ENCODE measurements at regions of chr14 and their contacts with region 1.

Region 1: GRCh38 chr14:54169254-54169924 is 212.8 kb upstream of the BMP4 start:
- DNase-seq: peak; percentile 100
- ATAC-seq: peak; percentile 85
- H3K4me3 ChIP-seq: peak overlapping the region; percentile 8; the same call in 1 of the 2 replicates
- H3K27ac ChIP-seq: peak overlapping the region; percentile 86
- H3K4me1 ChIP-seq: peaks cover 76% of the 10 kb centered on the region
- H3K27me3 ChIP-seq: no peaks in the 10 kb centered on the region
- CTCF ChIP-seq: peak; percentile 31; the same call in 1 of the 2 replicates

Region 2: GRCh38 chr14:53788566-53788965 is 380.8 kb before region 1 on chr14:
- CTCF ChIA-PET with region 1: interaction called, 10 read pairs
- POLR2A ChIA-PET with region 1: no interaction called
- intact Hi-C with region 1: no loop called
- DNase-seq: no peak
- ATAC-seq: no peak
- H3K4me3 ChIP-seq: no peak overlapping the region
- H3K27ac ChIP-seq: no peak overlapping the region
- H3K4me1 ChIP-seq: no peaks in the 10 kb centered on the region
- H3K27me3 ChIP-seq: no peaks in the 10 kb centered on the region
- CTCF ChIP-seq: no peak

Region 3: GRCh38 chr14:53929871-53930715 is 239.3 kb before region 1 on chr14:
- CTCF ChIA-PET with region 1: no interaction called
- POLR2A ChIA-PET with region 1: interaction called, 11 read pairs
- intact Hi-C with region 1: no loop called
- DNase-seq: peak; percentile 68
- ATAC-seq: peak; percentile 68
- H3K4me3 ChIP-seq: no peak overlapping the region
- H3K27ac ChIP-seq: no peak overlapping the region
- H3K4me1 ChIP-seq: peaks cover 25% of the 10 kb centered on the region
- H3K27me3 ChIP-seq: no peaks in the 10 kb centered on the region
- CTCF ChIP-seq: peak; percentile 94

Region 4: DNA sequence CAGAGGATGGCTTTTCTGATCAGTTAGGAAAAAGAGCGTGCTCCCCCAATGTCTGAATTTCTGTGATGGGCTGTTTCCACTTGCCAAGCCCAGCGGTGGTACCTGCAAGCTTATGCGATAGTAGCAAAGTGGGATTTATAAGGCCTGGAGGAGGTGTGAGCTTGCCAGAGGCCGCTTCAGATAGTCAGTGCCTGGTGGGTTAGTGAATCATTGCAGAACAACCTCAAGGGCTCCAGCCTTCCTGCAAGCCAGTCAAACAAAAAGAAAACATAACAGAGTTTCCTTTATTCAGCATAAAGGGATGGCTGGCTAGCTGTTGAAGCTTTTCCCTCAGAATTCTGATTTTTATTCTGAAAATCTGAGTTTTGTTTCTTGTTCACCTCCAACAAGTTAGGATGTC is 205.1 kb before region 1 on chr14:
- CTCF ChIA-PET with region 1: no interaction called
- POLR2A ChIA-PET with region 1: no interaction called
- intact Hi-C with region 1: no loop called
- DNase-seq: no peak
- ATAC-seq: peak; percentile 25; the same call in 1 of the 2 replicates
- H3K4me3 ChIP-seq: no peak overlapping the region
- H3K27ac ChIP-seq: no peak overlapping the region
- H3K4me1 ChIP-seq: peaks cover 5% of the 10 kb centered on the region; the same call in 1 of the 2 replicates
- H3K27me3 ChIP-seq: no peaks in the 10 kb centered on the region
- CTCF ChIP-seq: no peak

Region 5: GRCh38 chr14:54135791-54136280 is 33.6 kb before region 1 on chr14:
- CTCF ChIA-PET with region 1: no interaction called
- POLR2A ChIA-PET with region 1: no interaction called
- intact Hi-C with region 1: loop called (anchors 1 kb)
- DNase-seq: no peak
- ATAC-seq: no peak
- H3K4me3 ChIP-seq: no peak overlapping the region
- H3K27ac ChIP-seq: no peak overlapping the region
- H3K4me1 ChIP-seq: peaks cover 23% of the 10 kb centered on the region
- H3K27me3 ChIP-seq: no peaks in the 10 kb centered on the region
- CTCF ChIP-seq: no peak

Region 6: GRCh38 chr14:54200726-54201125 is 31.3 kb after region 1 on chr14:
- CTCF ChIA-PET with region 1: no interaction called
- POLR2A ChIA-PET with region 1: no interaction called
- intact Hi-C with region 1: no loop called
- DNase-seq: no peak
- ATAC-seq: no peak
- H3K4me3 ChIP-seq: no peak overlapping the region
- H3K27ac ChIP-seq: no peak overlapping the region
- H3K4me1 ChIP-seq: no peaks in the 10 kb centered on the region
- H3K27me3 ChIP-seq: no peaks in the 10 kb centered on the region
- CTCF ChIP-seq: no peak

Region 7: DNA sequence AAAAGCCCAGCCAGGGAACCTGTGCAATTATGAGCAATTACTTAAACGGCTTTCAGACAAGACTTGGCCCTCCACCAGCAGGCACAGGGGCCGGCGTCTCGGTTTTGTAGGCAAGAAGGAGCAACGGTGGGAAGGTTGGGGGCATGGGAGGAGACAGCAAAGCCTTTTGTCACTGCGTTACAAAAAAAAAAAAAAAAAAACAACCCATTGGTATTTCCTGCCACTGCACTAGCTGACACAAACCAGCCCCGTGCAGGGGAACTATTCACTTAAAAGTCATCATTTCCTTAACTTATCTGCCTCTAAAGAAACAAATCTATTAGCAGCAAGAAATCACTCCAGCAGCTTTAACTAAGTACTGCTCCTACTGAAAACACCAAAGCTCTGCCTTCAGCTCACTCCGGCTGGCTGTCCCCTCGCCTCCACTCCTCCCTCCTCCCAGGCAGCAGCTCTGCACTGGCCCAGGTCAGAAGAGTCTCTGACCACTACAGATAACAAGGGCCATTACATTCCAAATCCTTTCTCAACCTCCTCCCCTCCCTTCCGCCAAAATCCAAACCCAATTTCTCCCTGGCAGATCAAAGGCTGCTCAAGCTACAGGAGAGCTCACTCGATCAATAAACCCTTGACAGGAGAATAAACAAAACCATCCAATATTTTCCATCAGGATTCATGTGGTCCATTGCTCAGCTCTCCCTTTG is 122.3 kb after region 1 on chr14:
- CTCF ChIA-PET with region 1: no interaction called
- POLR2A ChIA-PET with region 1: no interaction called
- intact Hi-C with region 1: no loop called
- DNase-seq: no peak
- ATAC-seq: no peak
- H3K4me3 ChIP-seq: no peak overlapping the region
- H3K27ac ChIP-seq: no peak overlapping the region
- H3K4me1 ChIP-seq: peaks cover 4% of the 10 kb centered on the region; the same call in 1 of the 2 replicates
- H3K27me3 ChIP-seq: no peaks in the 10 kb centered on the region
- CTCF ChIP-seq: no peak

Region 8: GRCh38 chr14:54387328-54387727 is 217.9 kb after region 1 on chr14:
- CTCF ChIA-PET with region 1: no interaction called
- POLR2A ChIA-PET with region 1: no interaction called
- intact Hi-C with region 1: no loop called
- DNase-seq: no peak
- ATAC-seq: no peak
- H3K4me3 ChIP-seq: no peak overlapping the region
- H3K27ac ChIP-seq: no peak overlapping the region
- H3K4me1 ChIP-seq: no peaks in the 10 kb centered on the region
- H3K27me3 ChIP-seq: no peaks in the 10 kb centered on the region
- CTCF ChIP-seq: no peak

Measured in PC-3 (cell line).